ENCODE measurements at regions of chr3 and their contacts with region 1.

Region 1: GRCh38 chr3:15064835-15065549 is at the start of gene MRPS25:
- DNase-seq: peak; percentile 79 to 95 (median 85)
- ATAC-seq: peak; percentile 98
- H3K4me3 ChIP-seq: peak within 1 kb of the TSS; percentile 88
- H3K4me3 Mint-ChIP-seq: peak within 1 kb of the TSS; percentile 98
- H3K27ac ChIP-seq: peak within 1 kb of the TSS; percentile 61 to 77
- H3K27ac Mint-ChIP-seq: peak within 1 kb of the TSS; percentile 92
- H3K4me1 ChIP-seq: peaks cover 32% of the 10 kb centered on the region
- H3K4me1 Mint-ChIP-seq: peaks cover 25% of the 10 kb centered on the region
- H3K27me3 ChIP-seq: no peaks in the 10 kb centered on the region
- H3K27me3 Mint-ChIP-seq: no peaks in the 10 kb centered on the region
- CTCF ChIP-seq: no peak
- total RNA-seq, gene MRPS25: 59.9 to 60.2 TPM

Region 2: DNA sequence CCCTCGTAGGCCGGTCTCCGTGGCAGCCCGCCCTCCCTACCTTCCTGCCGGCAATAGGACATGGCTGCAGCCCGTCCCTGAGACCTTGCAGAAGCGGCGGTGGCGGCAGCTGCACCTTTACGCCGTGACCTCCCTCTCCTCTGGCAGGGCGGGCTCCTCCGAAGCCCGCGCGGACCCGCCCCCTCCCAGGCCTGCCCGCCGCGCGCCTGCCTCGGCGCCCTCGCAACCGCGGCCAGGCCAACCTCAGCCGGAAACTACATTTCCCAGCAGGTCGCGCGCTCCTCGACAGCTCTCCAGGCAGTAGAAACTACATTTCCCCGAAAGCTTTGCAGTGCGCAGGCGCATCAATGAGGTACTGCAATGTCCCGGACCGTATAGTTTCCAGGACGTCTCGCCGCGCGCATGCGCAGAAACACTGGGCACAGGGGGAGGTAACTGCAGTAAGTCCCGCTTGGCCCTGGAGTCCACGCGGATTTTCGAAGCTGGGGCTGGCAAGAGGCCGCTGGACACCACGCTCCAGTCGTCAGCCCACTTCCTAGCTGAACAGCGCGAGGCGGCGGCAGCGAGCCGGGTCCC is 940.3 kb before region 1 on chr3 and contains the starts of genes CHCHD4 and TMEM43:
- CTCF ChIA-PET with region 1: no interaction called
- POLR2A ChIA-PET with region 1: no interaction called
- intact Hi-C with region 1: loop called in 1 of 2 experiments (anchors 10 kb)
- DNase-seq: peak; percentile 94 to 100 (median 98)
- ATAC-seq: peak; percentile 89
- H3K4me3 ChIP-seq: peak within 1 kb of the TSS; percentile 96
- H3K4me3 Mint-ChIP-seq: peak within 1 kb of the TSS; percentile 97
- H3K27ac ChIP-seq: peak within 1 kb of the TSS; percentile 76 to 86
- H3K27ac Mint-ChIP-seq: peak within 1 kb of the TSS; percentile 91
- H3K4me1 ChIP-seq: peaks cover 53% of the 10 kb centered on the region
- H3K4me1 Mint-ChIP-seq: peaks cover 73% of the 10 kb centered on the region
- H3K27me3 ChIP-seq: no peaks in the 10 kb centered on the region
- H3K27me3 Mint-ChIP-seq: no peaks in the 10 kb centered on the region
- CTCF ChIP-seq: no peak
- total RNA-seq, gene CHCHD4: 0.50 to 1.1 TPM
- total RNA-seq, gene TMEM43: 24.8 to 27.6 TPM

Region 3: DNA sequence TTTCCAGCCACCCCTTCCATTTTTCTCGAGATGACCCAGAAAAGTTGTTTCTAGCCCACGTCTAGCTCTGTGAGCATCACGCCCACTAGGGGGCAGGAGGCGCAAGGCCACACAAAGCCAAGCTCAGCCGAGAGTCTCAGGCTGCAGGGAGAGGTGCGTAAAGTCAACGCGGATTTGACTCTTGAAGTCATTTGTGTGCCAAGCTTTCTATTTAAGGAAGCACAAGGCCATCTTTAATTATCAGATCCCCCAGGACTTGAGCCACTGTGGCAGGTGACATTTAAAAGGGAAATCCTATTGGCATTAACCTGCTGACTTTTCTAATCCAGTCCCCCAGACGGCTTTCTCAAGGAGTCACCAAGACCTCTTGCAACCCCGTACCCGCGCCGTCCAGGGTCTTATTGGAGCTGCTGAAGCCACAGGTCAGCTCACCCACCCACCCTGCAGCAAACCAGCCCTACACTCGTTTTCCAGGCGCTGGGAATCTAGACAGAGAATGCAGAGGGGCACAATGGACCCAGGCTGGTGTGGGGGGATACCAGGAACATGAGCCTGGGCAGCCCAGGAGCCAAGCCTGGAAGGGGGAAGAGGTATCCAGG is 203.1 kb after region 1 on chr3:
- CTCF ChIA-PET with region 1: no interaction called
- POLR2A ChIA-PET with region 1: no interaction called
- intact Hi-C with region 1: no loop called
- DNase-seq: peak; percentile 79 to 93 (median 82)
- ATAC-seq: peak; percentile 39
- H3K4me3 ChIP-seq: no peak overlapping the region
- H3K4me3 Mint-ChIP-seq: peak overlapping the region; percentile 8
- H3K27ac ChIP-seq: no peak overlapping the region
- H3K27ac Mint-ChIP-seq: peak overlapping the region; percentile 75
- H3K4me1 ChIP-seq: peaks cover 83% of the 10 kb centered on the region
- H3K4me1 Mint-ChIP-seq: peaks cover 86% of the 10 kb centered on the region
- H3K27me3 ChIP-seq: no peaks in the 10 kb centered on the region
- H3K27me3 Mint-ChIP-seq: no peaks in the 10 kb centered on the region
- CTCF ChIP-seq: peak; percentile 84

Measured in CD4-positive, alpha-beta T cell (primary cell).